SK-N-SH (cell line): ENCODE measurements at regions of chr1 and their contacts with region 1.

Region 1: GRCh38 chr1:221741711-221742554 is at the start of gene DUSP10:
- DNase-seq: peak; percentile 95
- H3K4me3 ChIP-seq: peak within 1 kb of the TSS; percentile 57 to 94
- H3K27ac ChIP-seq: peak within 1 kb of the TSS; percentile 96 to 98
- H3K4me1 ChIP-seq: peaks cover 0 to 19% of the 10 kb centered on the region in 2 experiments; a peak in 2 of 4 replicates
- H3K27me3 ChIP-seq: no peaks in the 10 kb centered on the region
- CTCF ChIP-seq: no peak
- EP300 ChIP-seq: peak; percentile 10 to 30; a peak in 1 of 4 replicates
- RAD21 ChIP-seq: peak; percentile 44
- polyA plus RNA-seq, gene DUSP10: 6.4 and 6.8 TPM in 2 replicates

Region 2: DNA sequence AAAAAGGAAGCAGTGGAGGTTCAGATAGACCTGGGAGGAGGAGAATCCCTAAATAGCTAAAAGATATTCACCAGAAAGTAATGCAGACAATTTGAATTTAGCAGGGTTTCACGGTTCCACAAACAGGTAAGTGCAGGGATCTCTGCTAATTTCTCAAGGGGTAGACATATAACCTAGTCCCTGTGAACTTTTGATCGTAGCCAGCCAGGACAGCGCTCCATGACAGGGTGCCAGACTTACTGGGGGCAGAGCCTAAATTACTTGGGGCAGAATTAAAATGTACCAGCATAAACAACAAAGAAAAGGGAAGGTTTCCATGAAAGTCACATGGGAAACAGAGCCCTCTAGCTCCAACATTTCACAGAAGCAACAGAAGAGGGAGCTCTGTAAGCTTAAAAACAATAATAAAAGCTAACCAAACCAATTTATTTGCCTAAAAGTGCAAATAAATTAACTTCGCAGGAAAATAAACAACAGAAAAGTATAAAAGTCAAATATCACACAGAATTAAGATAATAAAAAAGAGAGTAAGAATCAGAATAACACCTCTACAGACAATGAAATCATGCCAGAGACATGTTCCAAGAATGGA is 198.3 kb before region 1 on chr1:
- CTCF ChIA-PET with region 1: interaction called, 18 read pairs
- POLR2A ChIA-PET with region 1: interaction called, 4 read pairs
- DNase-seq: peak; percentile 21
- H3K4me3 ChIP-seq: no peak overlapping the region
- H3K27ac ChIP-seq: no peak overlapping the region
- H3K4me1 ChIP-seq: no peaks in the 10 kb centered on the region
- H3K27me3 ChIP-seq: no peaks in the 10 kb centered on the region
- CTCF ChIP-seq: peak; percentile 69
- EP300 ChIP-seq: no peak
- RAD21 ChIP-seq: peak; percentile 73

Region 3: DNA sequence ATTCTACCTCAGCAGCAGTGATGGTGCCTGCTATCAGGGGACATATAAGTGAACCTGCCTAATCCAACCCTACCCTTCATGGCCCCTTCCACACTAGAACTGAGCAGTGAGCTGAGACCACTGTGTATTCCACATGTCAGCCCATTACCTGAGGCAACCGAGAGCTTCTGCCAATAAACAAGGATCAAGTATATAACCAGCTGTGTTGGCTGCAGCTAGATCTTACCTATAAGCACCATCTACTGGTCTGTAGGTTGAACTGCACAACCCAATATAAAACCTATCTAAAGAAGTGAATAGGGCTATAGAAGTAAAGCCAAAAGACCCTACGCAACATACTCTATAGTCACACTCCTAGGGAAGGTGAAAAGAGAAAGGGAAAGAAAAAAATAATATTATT is 429.1 kb after region 1 on chr1:
- CTCF ChIA-PET with region 1: interaction called, 14 read pairs
- POLR2A ChIA-PET with region 1: no interaction called
- DNase-seq: peak; percentile 29
- H3K4me3 ChIP-seq: no peak overlapping the region
- H3K27ac ChIP-seq: no peak overlapping the region
- H3K4me1 ChIP-seq: no peaks in the 10 kb centered on the region
- H3K27me3 ChIP-seq: no peaks in the 10 kb centered on the region
- CTCF ChIP-seq: peak; percentile 64
- EP300 ChIP-seq: no peak
- RAD21 ChIP-seq: peak; percentile 80